Activated CD4-positive, alpha-beta memory T cell treated with anti-CD3 and anti-CD28 coated beads, Interleukin-2, amount 10 ng/mL, durations not matched to agents 7 days and 5 days (primary cell): ENCODE measurements at regions of chr2 and their contacts with region 1.

Region 1: DNA sequence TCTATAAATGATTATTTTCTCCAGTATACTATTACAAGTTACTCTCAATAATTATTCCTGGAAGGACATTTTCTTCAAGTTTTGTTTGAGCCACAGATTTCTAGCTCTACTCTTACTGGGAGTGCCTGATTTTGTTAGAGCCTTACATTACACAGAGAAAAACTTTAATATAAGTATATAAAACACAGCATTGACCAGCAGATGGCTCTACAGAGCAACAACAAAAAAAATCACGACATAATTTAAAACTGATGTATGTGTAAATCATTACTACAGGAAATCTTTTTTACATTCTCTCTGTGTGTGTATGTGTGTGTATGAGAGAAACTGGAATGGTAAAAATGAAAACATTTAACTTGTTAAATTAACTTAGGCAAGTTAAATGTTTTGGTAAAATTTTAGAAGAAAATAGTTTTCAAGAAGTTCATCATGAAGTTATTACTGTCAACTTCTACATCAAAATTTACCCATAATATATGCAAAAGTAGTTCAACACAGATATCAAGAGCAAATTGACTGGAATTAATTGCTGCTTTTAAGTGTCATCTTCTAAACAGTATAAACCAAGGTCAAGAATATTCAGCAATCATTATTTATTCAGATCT is 103.3 kb downstream of the MDH1 start:
- DNase-seq: no peak
- H3K4me3 Mint-ChIP-seq: no peak overlapping the region
- H3K27ac Mint-ChIP-seq: no peak overlapping the region
- H3K4me1 Mint-ChIP-seq: no peaks in the 10 kb centered on the region
- H3K27me3 Mint-ChIP-seq: no peaks in the 10 kb centered on the region

Region 2: GRCh38 chr2:63856303-63856603 is 164.1 kb after region 1 on chr2:
- CTCF ChIA-PET with region 1: interaction called, 42 read pairs
- POLR2A ChIA-PET with region 1: interaction called, 8 read pairs
- DNase-seq: peak; percentile 74
- H3K4me3 Mint-ChIP-seq: peak overlapping the region; percentile 51
- H3K27ac Mint-ChIP-seq: peak overlapping the region; percentile 99
- H3K4me1 Mint-ChIP-seq: peaks cover 77% of the 10 kb centered on the region
- H3K27me3 Mint-ChIP-seq: no peaks in the 10 kb centered on the region